HEK293 (cell line): ENCODE measurements at regions of chr2 and their contacts with region 1.

Region 1: GRCh38 chr2:38115216-38116032 is 39.5 kb upstream of the CYP1B1 start:
- H3K4me3 ChIP-seq: no peak overlapping the region
- H3K27ac ChIP-seq: no peak overlapping the region
- H3K4me1 ChIP-seq: peaks cover 10% of the 10 kb centered on the region
- CTCF ChIP-seq: peak; percentile 77

Region 2: GRCh38 chr2:37982147-37982582 is 133.3 kb before region 1 on chr2:
- CTCF ChIA-PET with region 1: interaction called, 33 read pairs
- POLR2A ChIA-PET with region 1: no interaction called
- H3K4me3 ChIP-seq: no peak overlapping the region; the same call in 1 of the 2 replicates
- H3K27ac ChIP-seq: no peak overlapping the region
- H3K4me1 ChIP-seq: no peaks in the 10 kb centered on the region
- CTCF ChIP-seq: peak; percentile 45

Region 3: DNA sequence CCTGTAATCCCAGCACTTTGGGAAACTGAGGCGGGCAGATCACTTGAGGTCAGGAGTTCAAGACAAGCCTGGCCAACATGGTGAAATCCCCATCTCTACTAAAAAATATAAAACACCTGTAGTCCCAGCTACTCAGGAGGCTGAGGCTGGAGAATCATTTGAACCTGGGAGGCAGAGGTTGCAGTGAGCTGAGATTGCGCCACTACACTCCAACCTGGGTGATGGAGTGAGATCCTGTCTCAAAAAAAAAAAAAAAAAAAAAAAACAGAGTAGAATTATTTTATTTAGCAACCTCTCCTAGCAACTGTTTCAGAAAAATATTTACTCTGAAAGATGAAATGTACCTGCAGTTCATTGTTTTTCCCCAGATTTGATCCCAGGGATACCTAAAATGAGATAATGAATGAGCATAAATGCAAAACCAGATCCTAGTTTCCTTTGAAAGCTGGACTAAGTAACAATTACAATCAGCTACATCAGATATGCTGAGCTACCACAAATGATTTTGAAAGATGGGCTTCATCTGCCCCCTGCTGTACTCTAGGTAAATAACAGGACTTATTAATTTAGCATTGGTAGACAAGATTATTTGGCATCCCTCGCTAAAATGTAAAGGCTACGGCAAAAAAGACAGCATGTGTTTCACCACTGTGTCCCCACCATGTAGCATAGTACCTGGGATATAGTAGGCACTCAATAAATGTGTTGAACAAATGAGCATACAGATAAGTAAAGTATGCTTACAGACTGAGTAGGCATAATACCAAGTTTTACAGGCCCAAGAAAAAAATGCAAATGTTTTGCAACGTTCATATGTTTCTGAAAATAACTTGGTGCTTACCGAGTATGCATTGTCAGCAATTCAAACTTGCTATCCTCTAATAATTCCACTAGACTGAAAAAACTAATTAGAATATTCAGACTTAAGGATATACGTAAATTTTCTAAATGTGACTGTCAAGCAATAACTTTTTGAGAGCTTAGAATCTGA is 159.2 kb after region 1 on chr2:
- CTCF ChIA-PET with region 1: interaction called, 16 read pairs
- POLR2A ChIA-PET with region 1: no interaction called
- H3K4me3 ChIP-seq: no peak overlapping the region
- H3K27ac ChIP-seq: no peak overlapping the region
- H3K4me1 ChIP-seq: no peaks in the 10 kb centered on the region
- CTCF ChIP-seq: peak; percentile 62